IMR-90 (cell line): ENCODE measurements at regions of chr2 and their contacts with region 1.

Region 1: GRCh38 chr2:97995734-97996624 is at the start of gene TMEM131:
- DNase-seq: peak; percentile 93
- ATAC-seq: peak; percentile 95
- H3K4me3 ChIP-seq: peak within 1 kb of the TSS; percentile 87
- H3K27ac ChIP-seq: peak within 1 kb of the TSS; percentile 98
- H3K4me1 ChIP-seq: peaks cover 2% of the 10 kb centered on the region; the same call in 1 of the 2 replicates
- H3K27me3 ChIP-seq: no peaks in the 10 kb centered on the region
- CTCF ChIP-seq: no peak
- POLR2A ChIP-seq: no peak
- RAD21 ChIP-seq: 0 out of 2 replicates have a peak, but pooled peaks have one; percentile 8
- total RNA-seq, gene TMEM131: 13.3 and 18.9 TPM in 2 replicates

Region 2: DNA sequence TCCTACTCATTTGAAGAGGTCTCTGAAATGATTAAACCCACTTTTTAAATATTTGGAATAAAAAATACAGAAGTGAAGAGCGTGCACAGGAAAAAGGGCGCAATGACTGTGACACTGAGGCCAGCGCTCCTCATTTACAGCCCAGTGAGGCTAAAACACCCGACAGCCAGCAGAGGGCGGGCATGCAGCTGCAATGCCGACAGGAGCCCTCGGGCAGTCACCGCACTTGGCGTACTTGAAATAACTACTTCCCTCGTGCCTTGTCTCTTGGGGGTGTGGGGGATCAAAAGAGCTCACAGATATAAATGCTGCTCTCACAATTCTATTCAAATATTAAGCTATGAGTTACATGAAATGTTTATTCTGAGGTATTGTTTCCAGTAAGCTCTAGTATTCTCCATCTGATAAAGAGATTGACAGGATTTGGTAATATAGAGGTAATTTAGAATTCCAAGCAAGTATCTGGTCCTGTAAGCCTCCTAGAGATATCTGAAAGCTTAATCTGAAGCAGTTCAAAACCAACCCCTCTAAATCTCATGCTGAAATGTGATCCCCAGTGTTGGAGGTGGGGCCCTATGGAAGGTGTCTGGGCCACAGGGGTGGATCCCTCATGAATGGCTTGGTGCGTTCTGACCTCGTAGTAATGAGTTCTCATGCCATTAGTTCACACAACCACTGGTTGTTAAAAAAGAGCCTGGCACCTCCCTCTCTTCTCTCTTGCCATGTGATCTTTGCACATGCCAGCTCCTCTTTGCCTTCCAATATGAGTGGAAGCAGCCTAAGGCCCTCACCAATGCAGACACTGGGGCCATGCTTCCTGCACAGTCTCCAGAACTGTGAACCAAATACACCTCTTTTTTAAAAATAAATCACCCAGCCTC is 189.0 kb before region 1 on chr2:
- CTCF ChIA-PET with region 1: no interaction called
- POLR2A ChIA-PET with region 1: no interaction called
- dilution Hi-C with region 1: no loop called
- in situ Hi-C with region 1: no loop called
- intact Hi-C with region 1: loop called (anchors 2 kb)
- DNase-seq: peak; percentile 69
- ATAC-seq: peak; percentile 98
- H3K4me3 ChIP-seq: no peak overlapping the region
- H3K27ac ChIP-seq: no peak overlapping the region
- H3K4me1 ChIP-seq: 0 out of 2 replicates have a peak, but pooled peaks cover 1% of the 10 kb centered on the region
- H3K27me3 ChIP-seq: no peaks in the 10 kb centered on the region
- CTCF ChIP-seq: peak; percentile 94
- POLR2A ChIP-seq: 0 out of 2 replicates have a peak, but pooled peaks have one; percentile 26
- RAD21 ChIP-seq: peak; percentile 98

Region 3: GRCh38 chr2:97950329-97951154 is 45.4 kb before region 1 on chr2:
- CTCF ChIA-PET with region 1: no interaction called
- POLR2A ChIA-PET with region 1: no interaction called
- dilution Hi-C with region 1: no loop called
- in situ Hi-C with region 1: no loop called
- intact Hi-C with region 1: loop called (anchors 1 kb)
- DNase-seq: peak; percentile 91
- ATAC-seq: peak; percentile 98
- H3K4me3 ChIP-seq: no peak overlapping the region
- H3K27ac ChIP-seq: peak overlapping the region; percentile 92
- H3K4me1 ChIP-seq: peaks cover 11% of the 10 kb centered on the region
- H3K27me3 ChIP-seq: no peaks in the 10 kb centered on the region
- CTCF ChIP-seq: no peak
- POLR2A ChIP-seq: no peak
- RAD21 ChIP-seq: no peak

Region 4: DNA sequence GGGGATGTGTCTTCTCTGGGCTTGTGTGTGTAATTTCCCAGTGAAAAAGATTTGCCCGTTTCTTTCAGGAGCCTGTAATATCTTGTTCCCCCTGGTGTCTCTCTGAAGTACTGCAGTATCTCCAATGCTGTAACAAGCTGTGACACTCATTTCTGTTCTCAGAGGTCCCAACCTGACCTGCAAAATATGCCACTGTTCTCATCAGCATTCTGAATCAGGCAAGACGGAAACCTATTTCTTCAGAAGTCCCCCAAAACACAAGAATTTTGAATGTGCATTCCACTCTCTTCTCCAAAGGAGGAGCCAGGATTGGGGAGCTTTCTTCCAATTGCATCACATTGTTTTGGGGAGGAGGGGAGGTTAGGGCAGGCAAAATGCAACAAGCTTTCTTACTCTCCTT is 273.3 kb after region 1 on chr2:
- CTCF ChIA-PET with region 1: interaction called, 4 read pairs
- POLR2A ChIA-PET with region 1: no interaction called
- dilution Hi-C with region 1: no loop called
- in situ Hi-C with region 1: no loop called
- intact Hi-C with region 1: loop called (anchors 10 kb)
- DNase-seq: peak; percentile 63
- ATAC-seq: peak; percentile 95
- H3K4me3 ChIP-seq: no peak overlapping the region
- H3K27ac ChIP-seq: no peak overlapping the region
- H3K4me1 ChIP-seq: no peaks in the 10 kb centered on the region
- H3K27me3 ChIP-seq: peaks cover 6% of the 10 kb centered on the region
- CTCF ChIP-seq: peak; percentile 67
- POLR2A ChIP-seq: no peak
- RAD21 ChIP-seq: peak; percentile 71